ENCODE measurements at regions of chr16 and their contacts with region 1.

Region 1: DNA sequence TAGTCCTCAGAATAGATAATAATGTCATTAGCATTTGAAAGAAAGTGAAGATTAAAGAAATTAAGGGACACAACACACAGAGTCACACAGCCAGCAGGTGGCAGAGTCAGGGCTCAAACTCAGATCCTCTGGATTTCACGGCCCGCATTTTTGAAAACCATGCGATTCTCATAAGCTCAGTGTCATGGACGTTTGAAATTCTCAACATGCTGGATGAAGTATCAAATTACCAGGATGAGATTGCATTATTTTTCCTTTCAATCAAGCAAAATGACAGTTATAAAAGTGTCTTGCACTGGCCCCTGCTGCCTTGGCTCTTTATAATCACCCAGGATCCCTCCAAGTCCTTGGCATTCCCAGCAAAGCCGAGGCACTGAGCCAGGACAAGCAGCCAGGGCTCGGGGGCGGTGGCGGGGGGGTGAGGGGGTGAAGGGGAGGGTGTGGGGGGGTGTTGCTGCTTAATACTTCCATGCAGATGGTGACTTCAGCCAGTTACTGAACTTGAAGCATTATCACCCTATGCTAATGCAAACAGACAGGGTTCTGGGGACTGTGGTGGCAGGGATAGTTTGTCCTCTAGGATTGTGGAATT is 6.6 kb upstream of the BMERB1 start:
- DNase-seq: peak; percentile 22
- ATAC-seq: peak; percentile 67
- H3K4me3 Mint-ChIP-seq: no peak overlapping the region
- H3K27ac Mint-ChIP-seq: no peak overlapping the region
- H3K4me1 Mint-ChIP-seq: peaks cover 3% of the 10 kb centered on the region
- H3K27me3 Mint-ChIP-seq: peaks cover 2% of the 10 kb centered on the region
- CTCF ChIP-seq: no peak

Region 2: GRCh38 chr16:15404792-15405191 is 23.0 kb before region 1 on chr16:
- CTCF ChIA-PET with region 1: no interaction called
- POLR2A ChIA-PET with region 1: no interaction called
- intact Hi-C with region 1: no loop called
- DNase-seq: no peak
- ATAC-seq: no peak
- H3K4me3 Mint-ChIP-seq: no peak overlapping the region
- H3K27ac Mint-ChIP-seq: no peak overlapping the region
- H3K4me1 Mint-ChIP-seq: peaks cover 16% of the 10 kb centered on the region
- H3K27me3 Mint-ChIP-seq: no peaks in the 10 kb centered on the region
- CTCF ChIP-seq: no peak

Region 3: DNA sequence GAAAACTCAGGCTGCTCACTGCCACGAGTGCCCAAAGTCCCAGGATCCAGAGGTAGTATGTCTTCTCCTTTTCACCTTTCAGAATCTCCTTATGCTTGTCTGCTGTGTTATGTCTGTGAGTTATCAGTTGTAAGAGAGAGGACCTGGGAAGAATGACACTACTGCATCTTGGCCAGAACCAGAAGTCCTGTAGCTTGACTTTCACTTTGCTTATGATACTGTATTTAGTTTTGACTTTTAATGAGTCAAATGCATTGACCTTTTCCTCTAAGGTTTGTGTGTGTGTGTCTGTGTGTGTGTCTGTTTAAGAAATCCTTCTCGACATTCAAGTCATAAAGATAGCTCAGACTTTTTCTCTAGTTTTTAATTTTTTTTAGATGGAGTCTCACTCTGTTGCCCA is 50.1 kb after region 1 on chr16:
- CTCF ChIA-PET with region 1: no interaction called
- POLR2A ChIA-PET with region 1: no interaction called
- intact Hi-C with region 1: no loop called
- DNase-seq: no peak
- ATAC-seq: no peak
- H3K4me3 Mint-ChIP-seq: no peak overlapping the region
- H3K27ac Mint-ChIP-seq: no peak overlapping the region
- H3K4me1 Mint-ChIP-seq: no peaks in the 10 kb centered on the region
- H3K27me3 Mint-ChIP-seq: no peaks in the 10 kb centered on the region
- CTCF ChIP-seq: no peak

Region 4: GRCh38 chr16:15493466-15494150 is 65.9 kb after region 1 on chr16:
- CTCF ChIA-PET with region 1: no interaction called
- POLR2A ChIA-PET with region 1: no interaction called
- intact Hi-C with region 1: no loop called
- DNase-seq: no peak
- ATAC-seq: no peak
- H3K4me3 Mint-ChIP-seq: no peak overlapping the region
- H3K27ac Mint-ChIP-seq: no peak overlapping the region
- H3K4me1 Mint-ChIP-seq: peaks cover 16% of the 10 kb centered on the region
- H3K27me3 Mint-ChIP-seq: no peaks in the 10 kb centered on the region
- CTCF ChIP-seq: no peak

Region 5: DNA sequence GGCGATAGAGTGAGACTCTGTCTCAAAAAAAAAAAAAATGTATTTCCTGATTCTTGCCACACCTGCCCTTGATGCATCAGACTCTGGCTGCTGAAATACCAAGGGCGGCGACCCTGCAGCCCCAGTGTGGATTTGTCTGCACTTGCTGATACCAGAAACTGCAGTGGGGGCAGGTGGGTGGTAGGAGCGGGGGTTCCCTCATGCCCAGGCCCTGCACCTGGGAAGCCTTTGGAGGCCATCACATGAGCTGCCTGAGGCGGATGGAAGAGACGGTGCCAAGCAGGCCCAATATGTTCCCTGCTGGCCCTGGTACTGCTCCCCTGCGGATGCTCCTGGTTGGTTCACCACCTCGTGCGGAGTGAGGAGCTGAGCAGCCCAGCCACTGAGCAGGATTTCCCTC is 164.6 kb after region 1 on chr16:
- CTCF ChIA-PET with region 1: interaction called, 8 read pairs
- POLR2A ChIA-PET with region 1: no interaction called
- intact Hi-C with region 1: loop called (anchors 5 kb)
- DNase-seq: peak; percentile 21
- ATAC-seq: no peak
- H3K4me3 Mint-ChIP-seq: no peak overlapping the region
- H3K27ac Mint-ChIP-seq: peak overlapping the region; percentile 84
- H3K4me1 Mint-ChIP-seq: peaks cover 65% of the 10 kb centered on the region
- H3K27me3 Mint-ChIP-seq: no peaks in the 10 kb centered on the region
- CTCF ChIP-seq: no peak

Region 6: GRCh38 chr16:15682105-15682570 is 254.4 kb after region 1 on chr16:
- CTCF ChIA-PET with region 1: interaction called, 5 read pairs
- POLR2A ChIA-PET with region 1: no interaction called
- intact Hi-C with region 1: loop called (anchors 1 kb)
- DNase-seq: no peak
- ATAC-seq: peak; percentile 87
- H3K4me3 Mint-ChIP-seq: no peak overlapping the region
- H3K27ac Mint-ChIP-seq: peak overlapping the region; percentile 42
- H3K4me1 Mint-ChIP-seq: peaks cover 8% of the 10 kb centered on the region
- H3K27me3 Mint-ChIP-seq: no peaks in the 10 kb centered on the region
- CTCF ChIP-seq: no peak

Region 7: GRCh38 chr16:15704545-15704987 is 276.8 kb after region 1 on chr16:
- CTCF ChIA-PET with region 1: interaction called, 9 read pairs
- POLR2A ChIA-PET with region 1: no interaction called
- intact Hi-C with region 1: loop called (anchors 1 kb)
- DNase-seq: peak; percentile 53
- ATAC-seq: peak; percentile 78
- H3K4me3 Mint-ChIP-seq: no peak overlapping the region
- H3K27ac Mint-ChIP-seq: no peak overlapping the region
- H3K4me1 Mint-ChIP-seq: peaks cover 5% of the 10 kb centered on the region
- H3K27me3 Mint-ChIP-seq: no peaks in the 10 kb centered on the region
- CTCF ChIP-seq: peak; percentile 47

Region 8: DNA sequence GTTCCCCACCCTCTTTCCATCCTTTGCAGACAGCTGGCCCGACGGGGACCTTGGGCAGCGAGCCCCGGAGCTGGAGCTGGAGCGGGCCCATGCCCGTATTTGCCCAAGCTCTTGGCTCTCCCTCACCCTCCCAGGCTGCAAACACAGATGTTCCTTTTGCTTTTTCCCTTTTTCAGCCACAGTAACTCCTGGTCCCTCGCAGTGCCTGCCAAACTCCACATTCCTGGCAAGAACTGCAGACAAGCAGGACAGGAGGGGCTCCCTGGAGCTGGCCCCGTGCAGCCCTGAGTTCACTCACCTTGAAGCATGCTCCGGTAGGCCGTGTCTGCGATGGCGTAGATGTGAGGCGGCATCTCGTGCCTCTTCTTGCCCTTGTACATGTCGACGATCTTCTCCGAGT is 395.2 kb after region 1 on chr16:
- CTCF ChIA-PET with region 1: no interaction called
- POLR2A ChIA-PET with region 1: interaction called, 7 read pairs
- intact Hi-C with region 1: loop called (anchors 5 kb)
- DNase-seq: no peak
- ATAC-seq: no peak
- H3K4me3 Mint-ChIP-seq: no peak overlapping the region
- H3K27ac Mint-ChIP-seq: no peak overlapping the region
- H3K4me1 Mint-ChIP-seq: no peaks in the 10 kb centered on the region
- H3K27me3 Mint-ChIP-seq: no peaks in the 10 kb centered on the region
- CTCF ChIP-seq: no peak

Region 9: DNA sequence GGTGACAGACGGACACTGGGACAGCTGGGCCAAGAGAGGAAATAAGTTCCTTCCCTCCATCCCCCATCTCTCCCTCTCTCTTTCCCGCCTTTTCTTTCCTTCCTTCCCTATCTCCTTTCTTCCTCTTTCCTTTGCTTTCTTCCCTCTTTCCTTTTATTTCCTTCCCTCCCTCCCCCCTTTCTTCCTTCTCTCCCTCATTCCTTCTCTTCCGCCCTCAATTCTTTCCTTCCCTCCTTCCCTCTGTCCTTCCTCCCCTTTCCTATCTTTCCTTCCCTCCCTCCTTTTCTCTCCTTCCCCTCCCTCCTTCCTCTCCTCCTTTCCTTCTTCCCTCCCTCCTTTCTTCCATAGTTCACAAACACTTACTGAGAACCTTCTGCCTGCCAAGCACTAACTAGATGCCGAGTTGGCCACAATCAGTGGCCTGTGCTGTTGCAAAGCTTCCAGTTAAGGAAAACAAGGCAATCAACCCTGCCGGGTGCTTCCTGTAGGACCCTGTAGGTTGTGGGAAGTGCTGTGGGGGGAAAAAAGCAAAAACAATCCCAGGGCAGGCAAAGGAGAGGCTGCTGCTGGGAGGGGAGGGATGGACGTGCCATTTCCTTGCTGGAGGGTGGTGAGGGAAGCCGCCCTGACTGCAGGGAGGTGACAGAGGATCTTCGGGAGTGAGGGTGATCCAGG is 763.9 kb after region 1 on chr16:
- CTCF ChIA-PET with region 1: no interaction called
- POLR2A ChIA-PET with region 1: no interaction called
- intact Hi-C with region 1: loop called (anchors 5 kb)
- DNase-seq: no peak
- ATAC-seq: no peak
- H3K4me3 Mint-ChIP-seq: no peak overlapping the region
- H3K27ac Mint-ChIP-seq: no peak overlapping the region
- H3K4me1 Mint-ChIP-seq: peaks cover 3% of the 10 kb centered on the region
- H3K27me3 Mint-ChIP-seq: peaks cover 4% of the 10 kb centered on the region
- CTCF ChIP-seq: no peak